Ovary (tissue), 10 donors: ENCODE measurements at regions of chr17 and their contacts with region 1.

Region 1: GRCh38 chr17:39057701-39058206 is 90.6 kb upstream of the FBXO47 start:
- DNase-seq: peak in 2 of 5 donors; percentile 7 to 29
- H3K4me3 ChIP-seq: no peak overlapping the region
- H3K27ac ChIP-seq: peak overlapping the region in 1 of 2 donors; percentile 38
- H3K4me1 ChIP-seq: no peaks in the 10 kb centered on the region
- H3K27me3 ChIP-seq: no peaks in the 10 kb centered on the region
- CTCF ChIP-seq: no peak
- EP300 ChIP-seq: no peak
- POLR2A ChIP-seq: no peak

Region 2: GRCh38 chr17:38853292-38854219 is 204.2 kb before region 1 on chr17 and contains the start of gene RPL23:
- intact Hi-C with region 1: no loop called
- DNase-seq: peak; percentile 93 to 96 (median 94)
- H3K4me3 ChIP-seq: peak within 1 kb of the TSS; percentile 49
- H3K27ac ChIP-seq: peak within 1 kb of the TSS; percentile 75 to 94
- H3K4me1 ChIP-seq: peaks cover 3% of the 10 kb centered on the region
- H3K27me3 ChIP-seq: no peaks in the 10 kb centered on the region
- CTCF ChIP-seq: peak in 2 of 3 donors; percentile 10 to 36
- EP300 ChIP-seq: no peak
- POLR2A ChIP-seq: peak; percentile 96
- total RNA-seq, gene RPL23: 2,982 to 5,219 (median 3,257) TPM

Region 3: DNA sequence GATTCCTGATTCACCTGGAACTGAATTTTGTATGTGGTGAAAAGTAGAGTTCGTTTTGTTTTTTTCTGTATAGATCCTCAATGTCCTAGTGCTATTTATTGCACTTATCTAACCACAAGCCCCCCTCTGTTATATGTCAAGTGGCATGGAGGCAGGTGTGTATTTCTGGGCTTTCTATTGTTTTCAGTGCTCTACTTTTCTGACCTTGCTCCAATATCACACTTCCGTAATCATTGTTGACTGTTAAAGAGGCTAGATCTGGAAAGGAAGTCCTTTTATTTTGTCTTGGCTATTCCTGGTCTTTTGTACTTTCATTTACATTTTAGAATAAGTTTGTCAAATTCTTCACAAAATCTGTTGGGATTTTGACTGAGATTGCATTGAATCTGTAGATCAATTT is 63.7 kb before region 1 on chr17:
- intact Hi-C with region 1: loop called in 1 of 4 experiments (anchors 5 kb)
- DNase-seq: no peak
- H3K4me3 ChIP-seq: no peak overlapping the region
- H3K27ac ChIP-seq: no peak overlapping the region
- H3K4me1 ChIP-seq: peaks cover 1% of the 10 kb centered on the region
- H3K27me3 ChIP-seq: no peaks in the 10 kb centered on the region
- CTCF ChIP-seq: no peak
- EP300 ChIP-seq: no peak
- POLR2A ChIP-seq: no peak

Region 4: GRCh38 chr17:39001703-39002637 is 55.8 kb before region 1 on chr17:
- intact Hi-C with region 1: loop called in 1 of 4 experiments (anchors 10 kb)
- DNase-seq: peak in 3 of 5 donors; percentile 30 to 55 (median 40)
- H3K4me3 ChIP-seq: no peak overlapping the region
- H3K27ac ChIP-seq: no peak overlapping the region
- H3K4me1 ChIP-seq: peaks cover 6% of the 10 kb centered on the region
- H3K27me3 ChIP-seq: no peaks in the 10 kb centered on the region
- CTCF ChIP-seq: no peak
- EP300 ChIP-seq: no peak
- POLR2A ChIP-seq: no peak

Region 5: DNA sequence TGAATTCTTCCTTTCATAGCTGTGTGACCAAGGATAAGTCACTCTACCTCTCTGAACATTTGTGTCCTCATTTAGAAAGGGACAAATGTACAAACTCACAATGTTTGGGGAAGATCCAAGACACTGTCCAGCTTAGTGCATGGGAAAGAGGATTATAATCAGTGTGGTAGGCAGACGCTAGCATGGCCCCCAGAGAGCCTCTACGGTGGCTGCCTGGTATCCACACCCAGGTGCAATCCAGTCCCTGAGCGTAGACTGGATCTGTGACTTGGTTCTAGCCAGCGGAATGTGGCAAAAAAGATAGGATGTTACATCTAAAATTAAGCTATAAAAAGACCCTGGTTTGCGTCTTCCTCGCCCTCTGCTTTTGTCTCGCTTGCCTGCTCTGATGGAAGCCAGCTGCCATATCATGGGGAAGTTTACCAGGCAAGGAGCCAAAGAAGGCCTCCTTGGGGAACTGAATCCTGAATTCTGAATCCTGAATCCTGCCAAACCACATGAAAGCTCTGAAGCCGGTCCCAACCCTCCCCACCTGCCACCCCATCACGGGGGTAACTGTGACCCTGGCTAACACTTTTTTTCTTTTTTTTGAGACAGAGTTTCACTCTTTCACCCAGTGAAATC is 42.0 kb after region 1 on chr17:
- intact Hi-C with region 1: loop called in 1 of 4 experiments (anchors 1 kb)
- DNase-seq: peak; percentile 87 to 94 (median 91)
- H3K4me3 ChIP-seq: no peak overlapping the region
- H3K27ac ChIP-seq: peak overlapping the region; percentile 28 to 92
- H3K4me1 ChIP-seq: peaks cover 41% of the 10 kb centered on the region
- H3K27me3 ChIP-seq: no peaks in the 10 kb centered on the region
- CTCF ChIP-seq: no peak
- EP300 ChIP-seq: no peak
- POLR2A ChIP-seq: no peak

Region 6: GRCh38 chr17:39194089-39194984 is 136.6 kb after region 1 on chr17:
- intact Hi-C with region 1: no loop called
- DNase-seq: peak in 1 of 5 donors; percentile 42
- H3K4me3 ChIP-seq: no peak overlapping the region
- H3K27ac ChIP-seq: no peak overlapping the region
- H3K4me1 ChIP-seq: peaks cover 6% of the 10 kb centered on the region
- H3K27me3 ChIP-seq: no peaks in the 10 kb centered on the region
- CTCF ChIP-seq: no peak
- EP300 ChIP-seq: no peak
- POLR2A ChIP-seq: no peak